ENCODE measurements at regions of chr7 and their contacts with region 1.

Region 1: GRCh38 chr7:41825927-41826480 is 123.1 kb upstream of the INHBA start:
- DNase-seq: no peak
- ATAC-seq: no peak
- H3K4me3 ChIP-seq: no peak overlapping the region
- H3K4me3 Mint-ChIP-seq: no peak overlapping the region
- H3K27ac ChIP-seq: no peak overlapping the region
- H3K27ac Mint-ChIP-seq: no peak overlapping the region
- H3K4me1 ChIP-seq: no peaks in the 10 kb centered on the region
- H3K4me1 Mint-ChIP-seq: no peaks in the 10 kb centered on the region
- H3K27me3 ChIP-seq: no peaks in the 10 kb centered on the region
- H3K27me3 Mint-ChIP-seq: peaks cover 4% of the 10 kb centered on the region
- CTCF ChIP-seq: no peak

Region 2: GRCh38 chr7:41809940-41810576 is 15.9 kb before region 1 on chr7:
- CTCF ChIA-PET with region 1: no interaction called
- POLR2A ChIA-PET with region 1: no interaction called
- intact Hi-C with region 1: loop called in 1 of 2 experiments (anchors 2 kb)
- DNase-seq: no peak
- ATAC-seq: no peak
- H3K4me3 ChIP-seq: no peak overlapping the region
- H3K4me3 Mint-ChIP-seq: no peak overlapping the region
- H3K27ac ChIP-seq: no peak overlapping the region
- H3K27ac Mint-ChIP-seq: no peak overlapping the region
- H3K4me1 ChIP-seq: no peaks in the 10 kb centered on the region
- H3K4me1 Mint-ChIP-seq: peaks cover 4% of the 10 kb centered on the region
- H3K27me3 ChIP-seq: no peaks in the 10 kb centered on the region
- H3K27me3 Mint-ChIP-seq: no peaks in the 10 kb centered on the region
- CTCF ChIP-seq: no peak